ENCODE measurements at regions of chr9 and their contacts with region 1.

Region 1: GRCh38 chr9:112379177-112380101 is 469 bp upstream of the HSDL2 start:
- DNase-seq: peak; percentile 89 to 97 (median 93)
- ATAC-seq: peak; percentile 98
- H3K4me3 ChIP-seq: peak overlapping the region; percentile 78
- H3K4me3 Mint-ChIP-seq: peak overlapping the region; percentile 86 to 100 (median 99)
- H3K27ac ChIP-seq: peak overlapping the region; percentile 85
- H3K27ac Mint-ChIP-seq: peak overlapping the region; percentile 84 to 99 (median 97)
- H3K4me1 ChIP-seq: peaks cover 14 to 17% of the 10 kb centered on the region in 2 donors
- H3K4me1 Mint-ChIP-seq: peaks cover 24 to 61% (median 53%) of the 10 kb centered on the region in 7 donors
- H3K27me3 ChIP-seq: no peaks in the 10 kb centered on the region
- H3K27me3 Mint-ChIP-seq: no peaks in the 10 kb centered on the region

Region 2: DNA sequence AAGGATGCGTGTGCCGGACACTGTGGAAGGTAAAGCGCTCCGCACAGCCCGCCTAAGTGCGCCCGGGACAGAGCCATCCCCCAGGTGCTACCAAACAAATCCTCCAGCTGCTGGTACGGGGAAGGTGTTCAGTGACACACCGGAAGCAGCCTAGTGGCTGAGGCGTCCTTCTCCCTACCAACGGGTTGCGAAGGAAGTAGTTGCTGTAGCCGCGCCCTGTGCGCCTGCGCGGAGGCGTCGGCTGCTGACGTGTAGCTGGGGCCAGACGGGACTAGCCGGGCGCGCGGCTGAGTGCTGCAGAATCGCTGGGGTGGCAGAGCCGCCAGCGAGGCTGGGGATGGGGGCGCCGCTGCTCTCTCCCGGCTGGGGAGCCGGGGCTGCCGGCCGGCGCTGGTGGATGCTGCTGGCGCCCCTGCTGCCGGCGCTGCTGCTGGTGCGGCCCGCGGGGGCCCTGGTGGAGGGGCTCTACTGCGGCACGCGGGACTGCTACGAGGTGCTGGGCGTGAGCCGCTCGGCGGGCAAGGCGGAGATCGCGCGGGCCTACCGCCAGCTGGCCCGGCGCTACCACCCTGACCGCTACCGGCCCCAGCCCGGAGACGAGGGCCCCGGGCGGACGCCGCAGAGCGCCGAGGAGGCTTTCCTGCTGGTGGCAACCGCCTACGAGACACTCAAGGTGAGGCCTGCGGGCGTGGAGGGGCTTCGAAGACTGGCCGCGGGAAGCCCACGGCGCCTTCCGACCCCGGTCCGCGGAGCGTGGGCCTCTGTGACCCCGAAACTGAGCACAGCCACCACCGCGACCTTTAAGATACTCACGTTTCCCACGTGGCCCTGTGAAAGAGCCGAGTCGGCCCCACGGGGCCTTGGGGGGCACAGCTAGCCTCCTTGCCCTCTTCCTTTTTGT is 748.1 kb before region 1 on chr9 and contains the start of gene DNAJC25:
- CTCF ChIA-PET with region 1: no interaction called
- POLR2A ChIA-PET with region 1: no interaction called
- intact Hi-C with region 1: loop called (anchors 1 kb)
- DNase-seq: peak; percentile 94 to 98 (median 97)
- ATAC-seq: peak; percentile 97
- H3K4me3 ChIP-seq: peak within 1 kb of the TSS; percentile 82
- H3K4me3 Mint-ChIP-seq: peak within 1 kb of the TSS; percentile 81 to 99 (median 94)
- H3K27ac ChIP-seq: peak within 1 kb of the TSS; percentile 83
- H3K27ac Mint-ChIP-seq: peak within 1 kb of the TSS; percentile 78 to 95 (median 89)
- H3K4me1 ChIP-seq: peaks cover 14 to 21% of the 10 kb centered on the region in 2 donors
- H3K4me1 Mint-ChIP-seq: peaks cover 29 to 57% (median 47%) of the 10 kb centered on the region in 7 donors
- H3K27me3 ChIP-seq: no peaks in the 10 kb centered on the region
- H3K27me3 Mint-ChIP-seq: no peaks in the 10 kb centered on the region
- total RNA-seq, gene DNAJC25: 4.0 to 6.0 (median 5.2) TPM

Region 3: DNA sequence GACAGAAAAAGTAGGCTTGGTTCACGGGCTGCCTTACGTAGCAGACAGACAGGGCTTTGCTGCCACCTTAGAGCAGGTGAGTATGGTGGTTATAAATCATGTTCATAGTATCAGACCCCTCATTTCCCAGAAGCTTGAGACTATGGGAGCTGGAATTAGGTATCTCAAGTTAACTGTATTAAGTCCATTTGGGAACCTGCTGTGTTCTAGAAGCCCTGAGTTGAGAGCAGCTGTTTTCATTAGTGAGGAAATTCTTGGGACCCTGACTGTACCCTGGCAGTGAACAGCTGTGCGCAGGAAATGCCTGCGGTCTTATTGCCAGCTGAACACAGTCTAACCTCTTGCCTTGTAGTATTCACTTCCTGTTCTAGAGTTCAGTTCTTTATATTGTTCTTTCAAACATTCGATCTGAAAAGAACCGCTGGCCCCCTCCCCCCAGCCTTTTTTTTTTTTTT is 453.0 kb before region 1 on chr9:
- CTCF ChIA-PET with region 1: no interaction called
- POLR2A ChIA-PET with region 1: no interaction called
- intact Hi-C with region 1: loop called in 1 of 2 experiments (anchors 10 kb)
- DNase-seq: peak in 7 of 9 donors; percentile 75 to 86 (median 82)
- ATAC-seq: peak; percentile 98
- H3K4me3 ChIP-seq: no peak overlapping the region
- H3K4me3 Mint-ChIP-seq: peak overlapping the region; percentile 61 to 79 (median 72)
- H3K27ac ChIP-seq: peak overlapping the region; percentile 23
- H3K27ac Mint-ChIP-seq: peak overlapping the region; percentile 79 to 94 (median 91)
- H3K4me1 ChIP-seq: peaks cover 29 to 35% of the 10 kb centered on the region in 2 donors
- H3K4me1 Mint-ChIP-seq: peaks cover 21 to 67% (median 50%) of the 10 kb centered on the region in 7 donors
- H3K27me3 ChIP-seq: no peaks in the 10 kb centered on the region
- H3K27me3 Mint-ChIP-seq: no peaks in the 10 kb centered on the region

Region 4: DNA sequence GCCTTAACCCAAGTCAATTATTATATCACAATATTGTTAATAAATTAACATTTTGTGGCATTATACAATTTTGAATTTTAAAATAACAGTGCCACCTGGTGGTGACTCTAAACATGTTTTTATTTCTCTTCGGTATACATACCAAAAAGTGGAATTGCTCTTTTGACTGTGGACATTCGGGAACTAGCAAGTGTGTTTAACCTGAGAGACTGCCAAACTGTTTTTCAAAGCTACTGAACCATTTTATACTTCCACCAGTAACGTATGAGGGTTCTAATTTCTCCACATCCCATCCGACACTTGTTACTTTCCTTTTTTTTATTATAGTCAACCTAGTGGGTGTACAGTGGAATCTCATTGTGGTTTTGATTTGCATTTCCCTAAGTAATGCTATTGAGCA is 17.8 kb before region 1 on chr9:
- CTCF ChIA-PET with region 1: interaction called, 4 read pairs
- POLR2A ChIA-PET with region 1: interaction called, 4 read pairs
- intact Hi-C with region 1: loop called (anchors 1 to 2 kb)
- DNase-seq: peak in 7 of 9 donors; percentile 16 to 51 (median 40)
- ATAC-seq: peak; percentile 60
- H3K4me3 ChIP-seq: no peak overlapping the region
- H3K4me3 Mint-ChIP-seq: no peak overlapping the region
- H3K27ac ChIP-seq: no peak overlapping the region
- H3K27ac Mint-ChIP-seq: no peak overlapping the region
- H3K4me1 ChIP-seq: peaks cover 0 to 4% of the 10 kb centered on the region in 2 donors
- H3K4me1 Mint-ChIP-seq: peaks cover 0 to 4% (median 0%) of the 10 kb centered on the region in 7 donors
- H3K27me3 ChIP-seq: no peaks in the 10 kb centered on the region
- H3K27me3 Mint-ChIP-seq: peaks cover 0 to 22% (median 9%) of the 10 kb centered on the region in 5 donors

Region 5: GRCh38 chr9:112717661-112718341 is 338.4 kb after region 1 on chr9 and contains the start of gene INIP:
- CTCF ChIA-PET with region 1: no interaction called
- POLR2A ChIA-PET with region 1: interaction called, 3 read pairs
- intact Hi-C with region 1: loop called (anchors 1 kb)
- DNase-seq: peak; percentile 91 to 99 (median 98)
- ATAC-seq: peak; percentile 94
- H3K4me3 ChIP-seq: peak within 1 kb of the TSS; percentile 82
- H3K4me3 Mint-ChIP-seq: peak within 1 kb of the TSS; percentile 83 to 100 (median 96)
- H3K27ac ChIP-seq: peak within 1 kb of the TSS; percentile 96
- H3K27ac Mint-ChIP-seq: peak within 1 kb of the TSS; percentile 96 to 100 (median 99)
- H3K4me1 ChIP-seq: peaks cover 10% of the 10 kb centered on the region in 2 donors
- H3K4me1 Mint-ChIP-seq: peaks cover 14 to 39% (median 28%) of the 10 kb centered on the region in 7 donors
- H3K27me3 ChIP-seq: no peaks in the 10 kb centered on the region
- H3K27me3 Mint-ChIP-seq: no peaks in the 10 kb centered on the region
- total RNA-seq, gene INIP: 13.8 to 35.0 (median 28.3) TPM

Region 6: GRCh38 chr9:113221003-113221799 is 841.8 kb after region 1 on chr9 and contains the starts of genes FKBP15 and SLC31A1:
- CTCF ChIA-PET with region 1: no interaction called
- POLR2A ChIA-PET with region 1: no interaction called
- intact Hi-C with region 1: loop called in 1 of 2 experiments (anchors 5 kb)
- DNase-seq: peak; percentile 88 to 96 (median 96)
- ATAC-seq: peak; percentile 99
- H3K4me3 ChIP-seq: peak within 1 kb of the TSS; percentile 91
- H3K4me3 Mint-ChIP-seq: peak within 1 kb of the TSS; percentile 89 to 99 (median 94)
- H3K27ac ChIP-seq: peak within 1 kb of the TSS; percentile 94
- H3K27ac Mint-ChIP-seq: peak within 1 kb of the TSS; percentile 86 to 98 (median 94)
- H3K4me1 ChIP-seq: peaks cover 10 to 25% of the 10 kb centered on the region in 2 donors
- H3K4me1 Mint-ChIP-seq: peaks cover 15 to 58% (median 48%) of the 10 kb centered on the region in 7 donors
- H3K27me3 ChIP-seq: no peaks in the 10 kb centered on the region
- H3K27me3 Mint-ChIP-seq: no peaks in the 10 kb centered on the region
- total RNA-seq, gene FKBP15: 22.4 to 50.6 (median 33.4) TPM
- total RNA-seq, gene SLC31A1: 4.5 to 10.4 (median 4.7) TPM

Measured in naive thymus-derived CD4-positive, alpha-beta T cell (primary cell).